ENCODE measurements at regions of chr2 and their contacts with region 1.

Region 1: DNA sequence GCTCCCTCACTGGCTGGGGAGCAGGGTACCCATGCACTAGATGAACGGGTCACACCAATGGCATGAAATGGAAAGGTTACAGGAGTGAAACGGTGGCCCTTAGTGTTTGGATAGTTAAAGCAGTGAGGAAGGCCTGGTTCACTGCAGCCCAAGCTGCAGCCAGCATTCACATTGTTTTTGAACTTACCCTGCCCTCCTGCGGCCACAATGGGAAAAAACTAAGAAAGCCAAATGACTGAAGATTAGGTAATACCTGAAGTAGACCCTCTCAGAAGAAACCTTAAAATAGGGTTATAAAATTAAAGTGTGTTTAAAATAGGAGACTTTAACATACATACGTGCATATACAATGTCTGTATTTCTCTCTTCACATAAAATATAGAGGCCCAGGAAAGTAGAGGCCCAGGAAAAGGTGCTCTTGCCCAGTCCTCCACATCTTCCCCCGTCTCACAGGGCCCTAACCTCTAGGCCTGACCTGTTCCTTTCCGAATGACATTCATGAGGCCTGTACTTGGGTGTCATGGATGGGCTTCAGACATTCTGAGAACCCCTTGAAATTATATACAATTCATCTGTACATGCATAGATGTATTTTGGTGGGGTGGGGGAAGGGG is 33.3 kb downstream of the DOK1 start:
- DNase-seq: peak; percentile 83
- ATAC-seq: peak; percentile 92
- H3K4me3 ChIP-seq: no peak overlapping the region
- H3K4me3 Mint-ChIP-seq: no peak overlapping the region
- H3K27ac ChIP-seq: no peak overlapping the region
- H3K27ac Mint-ChIP-seq: no peak overlapping the region
- H3K4me1 ChIP-seq: peaks cover 0 to 6% of the 10 kb centered on the region in 2 donors
- H3K4me1 Mint-ChIP-seq: peaks cover 9% of the 10 kb centered on the region
- H3K27me3 ChIP-seq: peaks cover 0 to 5% (median 5%) of the 10 kb centered on the region in 4 experiments
- H3K27me3 Mint-ChIP-seq: peaks cover 22% of the 10 kb centered on the region
- CTCF ChIP-seq: peak; percentile 80

Region 2: DNA sequence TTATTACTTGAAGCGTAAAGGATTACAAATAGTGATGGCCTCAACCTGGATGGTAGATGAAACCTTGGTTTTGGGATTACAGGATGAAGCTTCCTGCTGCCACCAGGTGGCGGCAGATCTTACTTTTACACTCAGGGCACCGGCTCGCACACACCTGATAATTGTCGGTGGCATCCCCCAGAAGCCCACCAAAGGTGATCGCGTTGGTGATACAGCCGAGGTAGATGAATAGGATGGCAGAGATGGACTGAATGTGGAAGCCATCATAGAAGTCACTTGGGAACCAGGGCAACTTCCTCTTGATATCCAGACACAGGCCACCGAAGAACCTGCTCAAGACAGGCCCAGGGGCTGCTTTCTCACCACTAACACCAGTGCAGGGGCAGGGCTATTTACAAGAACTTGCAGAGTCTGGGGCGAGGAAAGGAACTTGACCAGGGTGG is 337.6 kb before region 1 on chr2:
- CTCF ChIA-PET with region 1: interaction called, 40 read pairs
- POLR2A ChIA-PET with region 1: no interaction called
- intact Hi-C with region 1: loop called (anchors 1 kb)
- DNase-seq: peak; percentile 72
- ATAC-seq: peak; percentile 51
- H3K4me3 ChIP-seq: no peak overlapping the region
- H3K4me3 Mint-ChIP-seq: no peak overlapping the region
- H3K27ac ChIP-seq: no peak overlapping the region
- H3K27ac Mint-ChIP-seq: no peak overlapping the region
- H3K4me1 ChIP-seq: no peaks in the 10 kb centered on the region
- H3K4me1 Mint-ChIP-seq: peaks cover 6% of the 10 kb centered on the region
- H3K27me3 ChIP-seq: no peaks in the 10 kb centered on the region
- H3K27me3 Mint-ChIP-seq: no peaks in the 10 kb centered on the region
- CTCF ChIP-seq: peak; percentile 90

Region 3: GRCh38 chr2:74458132-74458925 is 129.4 kb before region 1 on chr2 and contains the start of gene WBP1:
- CTCF ChIA-PET with region 1: interaction called, 14 read pairs
- POLR2A ChIA-PET with region 1: no interaction called
- intact Hi-C with region 1: loop called (anchors 1 kb)
- DNase-seq: peak; percentile 100
- ATAC-seq: peak; percentile 79
- H3K4me3 ChIP-seq: peak within 1 kb of the TSS; percentile 80 to 100 (median 93)
- H3K4me3 Mint-ChIP-seq: peak within 1 kb of the TSS; percentile 94
- H3K27ac ChIP-seq: peak within 1 kb of the TSS; percentile 97 to 100
- H3K27ac Mint-ChIP-seq: peak within 1 kb of the TSS; percentile 99
- H3K4me1 ChIP-seq: peaks cover 33 to 40% of the 10 kb centered on the region in 2 donors
- H3K4me1 Mint-ChIP-seq: peaks cover 56% of the 10 kb centered on the region
- H3K27me3 ChIP-seq: no peaks in the 10 kb centered on the region
- H3K27me3 Mint-ChIP-seq: no peaks in the 10 kb centered on the region
- CTCF ChIP-seq: no peak
- total RNA-seq, gene WBP1: 91.5 and 98.4 TPM in 2 replicates

Region 4: GRCh38 chr2:74529357-74530238 is 58.2 kb before region 1 on chr2 and contains the starts of genes AUP1 and HTRA2:
- CTCF ChIA-PET with region 1: interaction called, 71 read pairs
- POLR2A ChIA-PET with region 1: no interaction called
- intact Hi-C with region 1: loop called (anchors 2 kb)
- DNase-seq: peak; percentile 95
- ATAC-seq: peak; percentile 87
- H3K4me3 ChIP-seq: peak within 1 kb of the TSS; percentile 62 to 98 (median 70)
- H3K4me3 Mint-ChIP-seq: peak within 1 kb of the TSS; percentile 97
- H3K27ac ChIP-seq: peak within 1 kb of the TSS; percentile 84 to 90
- H3K27ac Mint-ChIP-seq: peak within 1 kb of the TSS; percentile 96
- H3K4me1 ChIP-seq: peaks cover 39 to 49% of the 10 kb centered on the region in 2 donors
- H3K4me1 Mint-ChIP-seq: peaks cover 43% of the 10 kb centered on the region
- H3K27me3 ChIP-seq: no peaks in the 10 kb centered on the region
- H3K27me3 Mint-ChIP-seq: no peaks in the 10 kb centered on the region
- CTCF ChIP-seq: no peak
- total RNA-seq, gene AUP1: 190 and 201 TPM in 2 replicates
- total RNA-seq, gene HTRA2: 52.2 and 52.8 TPM in 2 replicates

Region 5: GRCh38 chr2:74553892-74554645 is 33.7 kb before region 1 on chr2 and contains the start of gene LOXL3:
- CTCF ChIA-PET with region 1: interaction called, 10 read pairs
- POLR2A ChIA-PET with region 1: no interaction called
- intact Hi-C with region 1: loop called (anchors 1 kb)
- DNase-seq: peak; percentile 93
- ATAC-seq: peak; percentile 48
- H3K4me3 ChIP-seq: peak within 1 kb of the TSS; percentile 51 to 99 (median 84)
- H3K4me3 Mint-ChIP-seq: peak within 1 kb of the TSS; percentile 96
- H3K27ac ChIP-seq: peak within 1 kb of the TSS; percentile 64 to 76
- H3K27ac Mint-ChIP-seq: peak within 1 kb of the TSS; percentile 94
- H3K4me1 ChIP-seq: peaks cover 16 to 39% of the 10 kb centered on the region in 2 donors
- H3K4me1 Mint-ChIP-seq: peaks cover 24% of the 10 kb centered on the region
- H3K27me3 ChIP-seq: peaks cover 0 to 15% (median 8%) of the 10 kb centered on the region in 4 experiments
- H3K27me3 Mint-ChIP-seq: no peaks in the 10 kb centered on the region
- CTCF ChIP-seq: no peak
- total RNA-seq, gene LOXL3: 0.66 and 1.2 TPM in 2 replicates

Region 6: DNA sequence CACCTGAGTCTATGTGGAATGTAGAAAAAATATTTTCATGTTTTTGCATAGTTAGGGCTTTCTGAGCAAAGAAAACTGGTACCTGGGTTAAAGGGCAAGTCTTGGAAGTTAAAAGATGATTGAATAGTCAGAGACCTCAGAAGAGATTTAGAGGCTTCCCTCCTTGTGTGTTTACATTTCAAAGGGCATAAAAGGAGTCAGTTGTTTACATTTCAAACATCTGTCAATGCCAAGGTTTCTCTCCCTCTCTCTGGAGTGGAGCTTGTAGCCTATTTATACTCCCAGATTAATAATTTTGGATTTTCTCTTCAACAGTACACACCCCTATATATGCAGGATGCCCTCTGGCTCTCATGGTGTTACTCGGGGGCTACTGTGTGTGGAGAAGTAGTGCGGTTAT is 51.8 kb after region 1 on chr2:
- CTCF ChIA-PET with region 1: no interaction called
- POLR2A ChIA-PET with region 1: no interaction called
- intact Hi-C with region 1: no loop called
- DNase-seq: no peak
- ATAC-seq: no peak
- H3K4me3 ChIP-seq: no peak overlapping the region
- H3K4me3 Mint-ChIP-seq: no peak overlapping the region
- H3K27ac ChIP-seq: no peak overlapping the region
- H3K27ac Mint-ChIP-seq: no peak overlapping the region
- H3K4me1 ChIP-seq: no peaks in the 10 kb centered on the region
- H3K4me1 Mint-ChIP-seq: no peaks in the 10 kb centered on the region
- H3K27me3 ChIP-seq: peaks cover 0 to 15% (median 8%) of the 10 kb centered on the region in 4 experiments
- H3K27me3 Mint-ChIP-seq: peaks cover 48% of the 10 kb centered on the region
- CTCF ChIP-seq: no peak

Region 7: DNA sequence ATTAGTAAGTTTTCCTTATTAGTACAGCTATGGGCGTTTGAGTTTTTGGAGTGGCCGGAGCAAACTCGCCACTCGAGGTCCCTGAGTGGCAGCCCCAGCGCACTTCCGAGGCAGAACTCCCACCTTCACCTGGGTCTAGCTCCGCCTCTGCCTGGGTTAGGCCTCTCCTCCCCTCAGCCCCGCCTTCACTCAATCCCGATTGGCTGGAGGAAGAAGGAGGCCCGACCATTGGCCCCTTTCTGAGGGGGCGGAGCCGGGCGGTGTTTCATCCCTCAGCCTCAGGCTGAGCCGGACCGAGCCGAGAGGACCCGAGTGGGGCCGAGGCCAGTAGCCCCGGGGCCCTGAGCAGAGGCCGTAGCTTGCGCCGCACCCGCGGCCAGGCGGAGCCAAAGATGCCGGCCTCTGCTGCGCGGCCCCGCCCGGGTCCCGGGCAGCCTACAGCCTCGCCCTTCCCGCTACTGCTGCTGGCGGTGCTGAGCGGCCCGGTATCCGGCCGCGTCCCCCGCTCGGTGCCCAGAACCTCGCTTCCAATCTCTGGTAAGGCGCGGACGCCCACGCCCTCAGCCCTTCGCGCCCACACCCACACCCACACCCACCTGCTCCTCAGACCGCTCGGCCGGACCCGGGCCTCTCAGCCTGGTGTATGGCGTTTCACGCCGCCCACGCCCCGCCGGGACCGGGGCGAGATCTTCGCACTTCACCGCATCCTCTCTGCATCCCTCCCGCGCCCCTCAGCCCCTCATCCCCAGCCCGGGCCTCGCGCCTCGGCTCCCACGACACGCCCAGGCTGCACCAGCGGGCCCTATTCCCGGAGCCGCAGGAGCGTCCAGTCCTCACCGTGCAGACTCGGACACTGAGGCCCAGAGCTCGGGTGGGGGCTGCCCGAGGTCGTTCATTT is 66.5 kb after region 1 on chr2 and contains the start of gene SEMA4F:
- CTCF ChIA-PET with region 1: interaction called, 7 read pairs
- POLR2A ChIA-PET with region 1: no interaction called
- intact Hi-C with region 1: loop called (anchors 2 kb)
- DNase-seq: peak; percentile 94
- ATAC-seq: peak; percentile 99
- H3K4me3 ChIP-seq: peak within 1 kb of the TSS; percentile 56 to 90 (median 80)
- H3K4me3 Mint-ChIP-seq: peak within 1 kb of the TSS; percentile 95
- H3K27ac ChIP-seq: peak within 1 kb of the TSS in 1 of 2 donors; percentile 53
- H3K27ac Mint-ChIP-seq: peak within 1 kb of the TSS; percentile 85
- H3K4me1 ChIP-seq: peaks cover 8 to 13% of the 10 kb centered on the region in 2 donors
- H3K4me1 Mint-ChIP-seq: peaks cover 18% of the 10 kb centered on the region
- H3K27me3 ChIP-seq: peaks cover 0 to 7% (median 3%) of the 10 kb centered on the region in 4 experiments
- H3K27me3 Mint-ChIP-seq: peaks cover 5% of the 10 kb centered on the region
- CTCF ChIP-seq: no peak
- total RNA-seq, gene SEMA4F: 18.9 and 19.3 TPM in 2 replicates

Region 8: DNA sequence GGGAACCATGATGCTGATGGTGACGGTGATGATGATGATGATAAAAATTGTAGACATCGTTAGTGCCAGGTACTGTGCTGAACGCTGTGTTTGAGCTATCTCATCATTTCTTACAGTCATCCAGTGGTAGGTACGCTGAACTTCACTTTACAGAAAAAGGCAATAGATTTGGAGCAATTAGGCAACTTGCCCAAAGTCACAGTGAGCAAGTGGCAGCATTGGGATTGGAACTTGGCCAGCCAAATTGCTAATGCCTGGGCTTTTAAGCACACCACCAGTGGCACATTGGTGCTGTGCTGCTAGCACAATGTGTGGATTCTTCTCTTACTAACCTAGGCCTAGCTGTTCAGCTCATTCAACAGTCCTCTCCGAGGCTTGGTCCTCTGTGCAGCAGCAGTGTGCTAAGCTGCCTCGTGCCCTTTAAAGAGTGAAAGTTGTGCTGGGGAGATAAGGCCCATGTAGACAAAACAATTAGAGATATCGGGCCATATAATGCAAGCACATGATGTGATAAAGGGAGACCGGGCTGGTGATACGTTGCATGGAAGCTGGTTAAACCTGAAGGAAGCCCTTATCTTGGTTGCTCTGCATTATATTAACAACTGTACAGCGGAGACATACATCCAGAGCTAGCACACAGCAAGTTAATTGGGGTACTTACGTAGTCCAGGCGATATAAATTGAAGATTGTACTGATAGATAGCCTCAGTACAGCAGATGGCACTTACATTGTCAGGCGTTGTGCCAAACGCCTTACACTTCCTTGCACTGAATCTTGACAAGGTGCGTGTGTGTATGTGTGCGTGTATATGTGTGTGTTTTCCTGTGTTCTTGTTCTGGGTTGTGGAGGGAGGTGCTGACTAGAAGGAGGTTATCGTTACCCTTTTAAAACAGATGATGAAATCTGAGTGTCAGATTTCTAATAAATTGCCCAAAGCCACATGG is 274.5 kb after region 1 on chr2:
- CTCF ChIA-PET with region 1: no interaction called
- POLR2A ChIA-PET with region 1: no interaction called
- intact Hi-C with region 1: no loop called
- DNase-seq: no peak
- ATAC-seq: no peak
- H3K4me3 ChIP-seq: no peak overlapping the region
- H3K4me3 Mint-ChIP-seq: no peak overlapping the region
- H3K27ac ChIP-seq: no peak overlapping the region
- H3K27ac Mint-ChIP-seq: no peak overlapping the region
- H3K4me1 ChIP-seq: peaks cover 16 to 30% of the 10 kb centered on the region in 2 donors
- H3K4me1 Mint-ChIP-seq: peaks cover 32% of the 10 kb centered on the region
- H3K27me3 ChIP-seq: no peaks in the 10 kb centered on the region
- H3K27me3 Mint-ChIP-seq: no peaks in the 10 kb centered on the region
- CTCF ChIP-seq: no peak